ENCODE measurements at regions of chr19 and their contacts with region 1.

Region 1: GRCh38 chr19:16247353-16248182 is 49.9 kb downstream of the AP1M1 start:
- DNase-seq: peak; percentile 88
- ATAC-seq: peak; percentile 88
- H3K4me3 ChIP-seq: no peak overlapping the region
- H3K4me3 Mint-ChIP-seq: peak overlapping the region; percentile 59
- H3K27ac ChIP-seq: peak overlapping the region; percentile 4 to 66
- H3K27ac Mint-ChIP-seq: peak overlapping the region; percentile 88
- H3K4me1 ChIP-seq: peaks cover 34 to 60% of the 10 kb centered on the region in 2 donors
- H3K4me1 Mint-ChIP-seq: peaks cover 34% of the 10 kb centered on the region
- H3K27me3 ChIP-seq: no peaks in the 10 kb centered on the region
- H3K27me3 Mint-ChIP-seq: no peaks in the 10 kb centered on the region
- CTCF ChIP-seq: peak; percentile 87

Region 2: GRCh38 chr19:15954820-15955219 is 292.7 kb before region 1 on chr19:
- CTCF ChIA-PET with region 1: no interaction called
- POLR2A ChIA-PET with region 1: no interaction called
- intact Hi-C with region 1: no loop called
- DNase-seq: no peak
- ATAC-seq: no peak
- H3K4me3 ChIP-seq: no peak overlapping the region
- H3K4me3 Mint-ChIP-seq: no peak overlapping the region
- H3K27ac ChIP-seq: no peak overlapping the region
- H3K27ac Mint-ChIP-seq: no peak overlapping the region
- H3K4me1 ChIP-seq: no peaks in the 10 kb centered on the region
- H3K4me1 Mint-ChIP-seq: no peaks in the 10 kb centered on the region
- H3K27me3 ChIP-seq: peaks cover 0 to 28% (median 24%) of the 10 kb centered on the region in 4 experiments
- H3K27me3 Mint-ChIP-seq: peaks cover 70% of the 10 kb centered on the region
- CTCF ChIP-seq: no peak

Region 3: DNA sequence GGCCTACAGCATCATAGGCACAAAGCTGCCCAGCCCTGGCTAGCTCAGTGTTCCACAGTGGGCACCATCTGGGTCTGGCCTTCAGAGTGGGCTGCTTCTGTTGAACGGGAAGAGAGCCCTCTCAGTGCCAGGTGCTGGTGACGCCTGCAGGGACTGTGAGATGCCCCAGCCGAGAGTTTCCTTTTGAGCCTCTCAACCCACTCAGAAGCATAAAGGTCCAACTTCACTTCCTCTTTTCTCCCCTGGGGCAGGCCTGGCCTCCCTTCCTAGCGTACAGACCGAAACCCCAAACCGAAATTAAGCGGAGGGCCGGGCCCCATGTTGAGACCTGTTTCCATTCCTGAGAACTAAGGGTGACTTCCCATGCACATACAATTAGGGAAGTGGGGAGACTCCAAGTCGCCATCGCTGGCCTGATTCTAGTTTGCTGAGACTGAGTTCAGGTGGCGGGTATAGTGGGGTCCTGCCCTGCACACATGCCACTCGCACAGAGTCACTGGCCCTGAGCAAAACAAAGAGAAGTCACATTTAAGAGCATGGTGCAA is 129.0 kb before region 1 on chr19:
- CTCF ChIA-PET with region 1: no interaction called
- POLR2A ChIA-PET with region 1: interaction called, 11 read pairs
- intact Hi-C with region 1: no loop called
- DNase-seq: peak; percentile 93
- ATAC-seq: peak; percentile 91
- H3K4me3 ChIP-seq: peak overlapping the region in 3 of 5 experiments; percentile 11 to 48 (median 23)
- H3K4me3 Mint-ChIP-seq: peak overlapping the region; percentile 70
- H3K27ac ChIP-seq: peak overlapping the region; percentile 86 to 88
- H3K27ac Mint-ChIP-seq: peak overlapping the region; percentile 97
- H3K4me1 ChIP-seq: peaks cover 64 to 75% of the 10 kb centered on the region in 2 donors
- H3K4me1 Mint-ChIP-seq: peaks cover 66% of the 10 kb centered on the region
- H3K27me3 ChIP-seq: no peaks in the 10 kb centered on the region
- H3K27me3 Mint-ChIP-seq: no peaks in the 10 kb centered on the region
- CTCF ChIP-seq: no peak

Region 4: DNA sequence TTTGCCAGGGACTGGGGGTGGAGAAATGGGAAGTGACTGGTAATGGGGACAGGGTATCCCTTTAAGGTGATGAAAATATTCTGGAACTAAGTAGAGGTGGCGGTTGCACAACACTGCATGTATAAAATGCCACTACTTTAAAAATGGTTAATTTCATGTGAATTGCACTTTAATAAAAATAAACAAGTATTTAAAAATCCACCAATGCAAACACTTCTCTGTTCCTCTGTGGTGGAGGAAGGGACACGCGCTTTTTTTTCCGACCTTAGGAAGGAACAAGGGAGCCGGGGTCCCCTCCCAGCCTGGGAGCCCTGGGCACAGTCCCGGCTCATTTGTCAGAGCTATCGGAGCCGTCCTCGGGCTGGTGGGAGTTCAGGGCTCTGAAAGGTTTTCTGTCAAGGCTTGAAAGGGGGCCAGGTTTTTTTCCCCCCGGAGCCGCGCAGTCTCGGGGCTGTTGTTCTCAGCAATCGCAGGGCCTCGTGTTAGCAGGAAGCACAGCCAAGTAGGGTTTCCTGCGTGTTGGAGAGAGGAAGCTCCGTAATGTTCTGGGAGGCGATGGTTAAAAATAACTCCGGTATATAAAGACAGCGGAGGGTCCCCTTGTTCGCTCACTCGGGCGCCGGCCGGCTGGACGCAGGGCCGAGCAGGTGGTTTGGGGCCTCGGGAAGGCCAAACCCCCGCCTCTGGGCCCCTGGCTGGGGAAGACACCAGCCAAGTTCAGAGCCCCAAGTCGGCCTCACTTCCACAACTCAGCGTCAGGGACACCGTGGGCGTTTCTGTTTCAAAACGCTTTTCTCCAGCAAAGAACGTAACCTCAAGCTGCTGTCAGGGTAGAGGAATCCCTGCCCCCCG is 35.9 kb after region 1 on chr19:
- CTCF ChIA-PET with region 1: interaction called, 4 read pairs
- POLR2A ChIA-PET with region 1: interaction called, 4 read pairs
- intact Hi-C with region 1: loop called (anchors 5 kb)
- DNase-seq: peak; percentile 66
- ATAC-seq: peak; percentile 69
- H3K4me3 ChIP-seq: peak overlapping the region; percentile 9 to 68 (median 30)
- H3K4me3 Mint-ChIP-seq: peak overlapping the region; percentile 77
- H3K27ac ChIP-seq: peak overlapping the region; percentile 51 to 73
- H3K27ac Mint-ChIP-seq: peak overlapping the region; percentile 82
- H3K4me1 ChIP-seq: peaks cover 37 to 45% of the 10 kb centered on the region in 2 donors
- H3K4me1 Mint-ChIP-seq: peaks cover 51% of the 10 kb centered on the region
- H3K27me3 ChIP-seq: no peaks in the 10 kb centered on the region
- H3K27me3 Mint-ChIP-seq: no peaks in the 10 kb centered on the region
- CTCF ChIP-seq: no peak

Region 5: GRCh38 chr19:16330368-16330801 is 82.8 kb after region 1 on chr19:
- CTCF ChIA-PET with region 1: interaction called, 101 read pairs
- POLR2A ChIA-PET with region 1: interaction called, 58 read pairs
- intact Hi-C with region 1: no loop called
- DNase-seq: peak; percentile 95
- ATAC-seq: peak; percentile 63
- H3K4me3 ChIP-seq: peak overlapping the region in 1 of 5 experiments; percentile 20
- H3K4me3 Mint-ChIP-seq: peak overlapping the region; percentile 70
- H3K27ac ChIP-seq: peak overlapping the region; percentile 23 to 35
- H3K27ac Mint-ChIP-seq: peak overlapping the region; percentile 98
- H3K4me1 ChIP-seq: peaks cover 24 to 40% of the 10 kb centered on the region in 2 donors
- H3K4me1 Mint-ChIP-seq: peaks cover 51% of the 10 kb centered on the region
- H3K27me3 ChIP-seq: no peaks in the 10 kb centered on the region
- H3K27me3 Mint-ChIP-seq: no peaks in the 10 kb centered on the region
- CTCF ChIP-seq: no peak

Region 6: GRCh38 chr19:16363133-16363851 is 115.7 kb after region 1 on chr19:
- CTCF ChIA-PET with region 1: interaction called, 13 read pairs
- POLR2A ChIA-PET with region 1: interaction called, 4 read pairs
- intact Hi-C with region 1: no loop called
- DNase-seq: peak; percentile 3
- ATAC-seq: no peak
- H3K4me3 ChIP-seq: no peak overlapping the region
- H3K4me3 Mint-ChIP-seq: peak overlapping the region; percentile 19
- H3K27ac ChIP-seq: no peak overlapping the region
- H3K27ac Mint-ChIP-seq: peak overlapping the region; percentile 53
- H3K4me1 ChIP-seq: peaks cover 82 to 98% of the 10 kb centered on the region in 2 donors
- H3K4me1 Mint-ChIP-seq: peaks cover 83% of the 10 kb centered on the region
- H3K27me3 ChIP-seq: no peaks in the 10 kb centered on the region
- H3K27me3 Mint-ChIP-seq: no peaks in the 10 kb centered on the region
- CTCF ChIP-seq: no peak

Region 7: GRCh38 chr19:16400911-16401591 is 153.5 kb after region 1 on chr19:
- CTCF ChIA-PET with region 1: interaction called, 15 read pairs
- POLR2A ChIA-PET with region 1: interaction called, 5 read pairs
- intact Hi-C with region 1: no loop called
- DNase-seq: no peak
- ATAC-seq: no peak
- H3K4me3 ChIP-seq: no peak overlapping the region
- H3K4me3 Mint-ChIP-seq: no peak overlapping the region
- H3K27ac ChIP-seq: peak overlapping the region in 1 of 2 donors; percentile 27
- H3K27ac Mint-ChIP-seq: peak overlapping the region; percentile 64
- H3K4me1 ChIP-seq: peaks cover 44 to 58% of the 10 kb centered on the region in 2 donors
- H3K4me1 Mint-ChIP-seq: peaks cover 56% of the 10 kb centered on the region
- H3K27me3 ChIP-seq: no peaks in the 10 kb centered on the region
- H3K27me3 Mint-ChIP-seq: no peaks in the 10 kb centered on the region
- CTCF ChIP-seq: no peak

Measured in B cell (primary cell).